ENCODE measurements at regions of chr10 and their contacts with region 1.

Region 1: DNA sequence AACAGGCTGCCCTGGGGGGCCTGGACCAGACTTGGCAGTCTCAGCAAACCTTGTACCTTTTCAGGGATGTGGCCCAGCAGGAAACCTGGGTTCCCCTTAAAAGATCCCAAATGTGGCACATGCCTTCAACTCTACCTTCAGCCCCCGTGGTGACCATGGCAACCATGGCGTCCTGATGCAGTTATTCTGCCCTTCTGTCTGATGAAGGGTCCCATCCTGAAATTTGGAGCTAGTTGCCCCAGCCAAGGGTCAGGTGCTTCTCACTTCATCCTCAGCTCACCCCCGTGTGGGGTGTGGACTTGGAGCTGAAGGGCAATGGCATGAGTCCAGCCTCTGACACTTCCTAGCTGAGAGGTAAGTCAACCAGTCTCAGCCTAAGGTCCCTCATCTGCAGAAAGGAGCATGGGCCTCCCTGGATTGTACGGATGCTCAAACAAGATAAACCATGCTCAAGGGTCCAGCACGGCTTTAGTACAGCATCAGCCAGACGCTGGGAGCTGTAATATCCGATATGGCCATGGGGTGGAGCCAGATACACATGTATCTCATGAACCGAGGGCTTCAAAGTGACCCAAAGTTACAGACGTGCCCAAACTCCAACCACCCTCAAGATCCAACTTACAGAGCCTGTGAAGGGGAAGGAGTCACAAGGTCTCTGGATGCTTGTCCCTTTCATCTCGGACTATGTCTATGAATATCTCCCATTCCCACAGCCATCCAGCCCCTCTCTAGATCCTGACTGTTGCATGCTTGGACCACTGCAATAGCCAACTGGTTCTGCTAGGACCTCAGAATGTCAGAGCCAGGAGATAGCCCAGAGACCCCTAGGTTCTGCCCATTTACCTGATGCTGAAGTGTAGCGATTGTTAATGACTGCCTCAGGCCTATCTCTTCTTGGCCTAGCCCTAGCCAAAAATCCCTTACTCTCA is 142.5 kb downstream of the SH3PXD2A start:
- DNase-seq: peak; percentile 79 to 88
- H3K4me3 ChIP-seq: no peak overlapping the region
- H3K4me3 Mint-ChIP-seq: no peak overlapping the region
- H3K27ac Mint-ChIP-seq: no peak overlapping the region
- H3K4me1 ChIP-seq: peaks cover 21% of the 10 kb centered on the region
- H3K4me1 Mint-ChIP-seq: peaks cover 22% of the 10 kb centered on the region
- H3K27me3 ChIP-seq: no peaks in the 10 kb centered on the region
- H3K27me3 Mint-ChIP-seq: no peaks in the 10 kb centered on the region
- CTCF ChIP-seq: peak; percentile 82 to 93

Region 2: DNA sequence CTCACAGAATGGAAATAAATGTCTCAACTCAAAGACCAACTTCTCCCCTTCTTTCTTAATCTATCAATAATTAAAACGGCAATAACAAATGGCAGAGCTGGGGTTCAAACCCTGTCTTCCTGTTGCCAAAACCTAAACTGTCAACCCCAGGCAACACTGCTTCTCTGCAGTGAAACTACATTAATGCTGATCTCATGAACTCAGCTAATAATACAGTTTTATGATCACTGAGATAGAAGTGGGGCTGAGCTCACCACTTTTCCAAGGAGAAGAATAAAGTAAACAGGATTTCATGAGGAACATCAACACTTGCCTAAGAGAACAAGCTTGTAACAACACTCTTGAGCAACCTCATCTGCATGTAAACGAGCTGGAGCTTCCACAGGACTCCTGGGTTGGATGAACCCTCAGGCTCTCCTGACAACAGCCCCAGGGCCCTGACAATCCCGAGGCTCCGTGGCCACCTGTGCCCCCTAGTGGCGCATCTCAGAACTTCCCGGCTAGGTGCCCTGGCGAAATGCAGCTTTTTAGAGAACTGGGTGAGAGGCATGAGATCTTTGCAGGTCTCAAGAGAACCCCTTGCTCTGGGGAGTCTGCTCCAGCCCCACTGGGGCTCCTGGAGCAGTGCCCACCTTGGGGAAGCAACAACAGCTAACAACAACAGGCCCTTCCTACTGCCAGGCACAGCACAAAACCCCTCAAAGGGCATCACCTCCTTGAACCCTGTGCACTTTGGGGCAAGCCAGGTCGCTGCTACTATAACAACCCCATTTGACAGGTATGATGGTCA is 26.8 kb before region 1 on chr10:
- CTCF ChIA-PET with region 1: interaction called, 12 read pairs
- POLR2A ChIA-PET with region 1: no interaction called
- intact Hi-C with region 1: no loop called
- DNase-seq: peak; percentile 78 to 87
- H3K4me3 ChIP-seq: no peak overlapping the region
- H3K4me3 Mint-ChIP-seq: no peak overlapping the region
- H3K27ac Mint-ChIP-seq: no peak overlapping the region
- H3K4me1 ChIP-seq: peaks cover 25% of the 10 kb centered on the region
- H3K4me1 Mint-ChIP-seq: peaks cover 16% of the 10 kb centered on the region
- H3K27me3 ChIP-seq: no peaks in the 10 kb centered on the region
- H3K27me3 Mint-ChIP-seq: no peaks in the 10 kb centered on the region
- CTCF ChIP-seq: peak; percentile 96 to 98

Region 3: GRCh38 chr10:103781329-103782061 is 68.7 kb after region 1 on chr10:
- CTCF ChIA-PET with region 1: interaction called, 4 read pairs
- POLR2A ChIA-PET with region 1: no interaction called
- intact Hi-C with region 1: loop called (anchors 2 kb)
- DNase-seq: peak in 1 of 2 experiments; percentile 56
- H3K4me3 ChIP-seq: no peak overlapping the region
- H3K4me3 Mint-ChIP-seq: no peak overlapping the region
- H3K27ac Mint-ChIP-seq: no peak overlapping the region
- H3K4me1 ChIP-seq: 0 out of 2 replicates have a peak, but pooled peaks cover 8% of the 10 kb centered on the region
- H3K4me1 Mint-ChIP-seq: peaks cover 30% of the 10 kb centered on the region
- H3K27me3 ChIP-seq: no peaks in the 10 kb centered on the region
- H3K27me3 Mint-ChIP-seq: no peaks in the 10 kb centered on the region
- CTCF ChIP-seq: peak; percentile 35 to 42

Region 4: DNA sequence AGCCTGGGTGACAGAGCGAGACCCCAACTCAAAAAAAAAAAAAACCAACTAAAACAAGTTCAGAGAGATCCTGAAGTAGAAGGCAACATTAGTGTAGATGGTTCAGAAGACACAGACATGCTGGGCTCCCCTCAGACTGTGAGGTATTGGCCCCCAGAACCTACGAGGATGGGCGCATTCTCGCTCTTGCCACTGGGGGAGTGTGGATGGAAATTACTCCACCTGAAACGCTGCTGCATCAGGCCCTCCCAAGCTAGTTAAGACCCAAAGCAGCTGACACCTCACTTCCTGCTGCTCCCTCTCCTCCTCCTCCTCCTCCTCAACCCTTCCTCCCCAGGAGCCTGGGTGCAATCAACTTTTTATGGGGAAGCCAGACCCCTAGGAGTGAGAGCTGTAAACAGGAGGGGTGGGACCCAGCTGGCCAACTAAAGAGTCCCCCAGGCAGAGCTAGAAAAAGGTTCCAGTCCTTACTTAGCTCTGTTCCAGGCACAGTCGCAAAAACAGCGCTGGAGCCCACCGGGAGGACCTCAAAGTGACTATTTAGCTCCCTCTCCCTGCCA is 135.2 kb after region 1 on chr10:
- CTCF ChIA-PET with region 1: interaction called, 15 read pairs
- POLR2A ChIA-PET with region 1: no interaction called
- intact Hi-C with region 1: no loop called
- DNase-seq: peak; percentile 31 to 43
- H3K4me3 ChIP-seq: no peak overlapping the region
- H3K4me3 Mint-ChIP-seq: no peak overlapping the region
- H3K27ac Mint-ChIP-seq: peak overlapping the region; percentile 19
- H3K4me1 ChIP-seq: 0 out of 2 replicates have a peak, but pooled peaks cover 4% of the 10 kb centered on the region
- H3K4me1 Mint-ChIP-seq: peaks cover 13% of the 10 kb centered on the region
- H3K27me3 ChIP-seq: no peaks in the 10 kb centered on the region
- H3K27me3 Mint-ChIP-seq: no peaks in the 10 kb centered on the region
- CTCF ChIP-seq: peak; percentile 34 to 43

Region 5: GRCh38 chr10:104028146-104028545 is 315.3 kb after region 1 on chr10:
- CTCF ChIA-PET with region 1: no interaction called
- POLR2A ChIA-PET with region 1: no interaction called
- intact Hi-C with region 1: loop called (anchors 10 kb)
- DNase-seq: peak in 1 of 2 experiments; percentile 47
- H3K4me3 ChIP-seq: no peak overlapping the region
- H3K4me3 Mint-ChIP-seq: no peak overlapping the region
- H3K27ac Mint-ChIP-seq: no peak overlapping the region
- H3K4me1 ChIP-seq: no peaks in the 10 kb centered on the region
- H3K4me1 Mint-ChIP-seq: no peaks in the 10 kb centered on the region
- H3K27me3 ChIP-seq: no peaks in the 10 kb centered on the region
- H3K27me3 Mint-ChIP-seq: no peaks in the 10 kb centered on the region
- CTCF ChIP-seq: peak in 1 of 2 experiments; percentile 66